ENCODE measurements at regions of chr13 and their contacts with region 1.

Region 1: GRCh38 chr13:32538621-32539246 is at the start of gene N4BP2L2:
- DNase-seq: peak; percentile 95
- H3K4me3 Mint-ChIP-seq: peak within 1 kb of the TSS; percentile 99
- H3K27ac Mint-ChIP-seq: peak within 1 kb of the TSS; percentile 100
- H3K4me1 Mint-ChIP-seq: peaks cover 41% of the 10 kb centered on the region
- H3K27me3 Mint-ChIP-seq: peaks cover 2% of the 10 kb centered on the region
- total RNA-seq, gene N4BP2L2: 86.6 to 102 TPM

Region 2: GRCh38 chr13:32315238-32316027 is 223.3 kb before region 1 on chr13 and contains the starts of genes BRCA2 and ZAR1L:
- CTCF ChIA-PET with region 1: no interaction called
- POLR2A ChIA-PET with region 1: interaction called, 13 read pairs
- intact Hi-C with region 1: loop called (anchors 1 kb)
- DNase-seq: peak; percentile 93
- H3K4me3 Mint-ChIP-seq: peak within 1 kb of the TSS; percentile 95
- H3K27ac Mint-ChIP-seq: peak within 1 kb of the TSS; percentile 99
- H3K4me1 Mint-ChIP-seq: peaks cover 13% of the 10 kb centered on the region
- H3K27me3 Mint-ChIP-seq: no peaks in the 10 kb centered on the region
- total RNA-seq, gene BRCA2: 22.1 to 23.1 TPM
- total RNA-seq, gene ZAR1L: not detected

Region 3: DNA sequence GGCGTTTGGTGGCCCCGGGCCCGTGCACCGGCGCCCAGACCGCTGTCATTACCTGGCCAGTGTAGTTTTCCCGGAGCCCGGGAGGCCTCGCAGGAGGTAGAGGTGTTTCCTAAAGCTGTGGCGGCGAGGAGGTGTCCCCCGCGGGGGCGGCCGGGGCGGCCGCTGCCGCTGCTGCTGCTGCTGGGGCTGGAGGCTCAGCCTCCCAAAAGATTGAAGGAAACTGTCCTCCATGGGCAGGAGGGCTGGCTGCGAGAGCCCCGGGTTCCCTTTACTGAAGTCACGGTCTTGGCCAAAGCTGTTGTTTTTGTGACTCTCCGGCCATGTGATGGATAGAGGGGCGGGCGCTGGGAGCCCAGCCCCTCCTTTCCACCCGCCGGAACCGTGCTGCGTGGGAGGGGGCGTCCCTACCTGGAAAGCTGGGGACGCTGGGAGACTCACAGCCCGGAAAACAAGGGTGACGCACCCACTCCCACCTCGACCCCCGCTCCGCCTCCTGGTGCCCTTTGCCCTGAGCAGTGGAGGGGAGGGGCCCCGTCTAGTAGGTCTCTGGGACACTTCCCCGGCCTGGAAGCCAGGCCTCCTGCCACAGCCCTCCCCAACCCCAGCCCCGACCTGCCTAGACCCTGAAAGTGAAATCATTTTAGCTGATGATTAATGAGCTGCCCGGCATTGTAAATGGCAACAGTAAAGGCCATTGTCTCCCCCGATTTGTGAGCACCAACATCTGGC is 110.7 kb before region 1 on chr13 and contains the start of gene N4BP2L1:
- CTCF ChIA-PET with region 1: no interaction called
- POLR2A ChIA-PET with region 1: interaction called, 6 read pairs
- intact Hi-C with region 1: loop called (anchors 1 kb)
- DNase-seq: peak; percentile 94
- H3K4me3 Mint-ChIP-seq: peak within 1 kb of the TSS; percentile 88
- H3K27ac Mint-ChIP-seq: peak within 1 kb of the TSS; percentile 96
- H3K4me1 Mint-ChIP-seq: peaks cover 38% of the 10 kb centered on the region
- H3K27me3 Mint-ChIP-seq: no peaks in the 10 kb centered on the region
- total RNA-seq, gene N4BP2L1: 22.1 to 24.0 TPM

Region 4: GRCh38 chr13:32447894-32448623 is 90.7 kb before region 1 on chr13:
- CTCF ChIA-PET with region 1: no interaction called
- POLR2A ChIA-PET with region 1: no interaction called
- intact Hi-C with region 1: no loop called
- DNase-seq: no peak
- H3K4me3 Mint-ChIP-seq: no peak overlapping the region
- H3K27ac Mint-ChIP-seq: peak overlapping the region; percentile 40
- H3K4me1 Mint-ChIP-seq: peaks cover 14% of the 10 kb centered on the region
- H3K27me3 Mint-ChIP-seq: no peaks in the 10 kb centered on the region

Region 5: DNA sequence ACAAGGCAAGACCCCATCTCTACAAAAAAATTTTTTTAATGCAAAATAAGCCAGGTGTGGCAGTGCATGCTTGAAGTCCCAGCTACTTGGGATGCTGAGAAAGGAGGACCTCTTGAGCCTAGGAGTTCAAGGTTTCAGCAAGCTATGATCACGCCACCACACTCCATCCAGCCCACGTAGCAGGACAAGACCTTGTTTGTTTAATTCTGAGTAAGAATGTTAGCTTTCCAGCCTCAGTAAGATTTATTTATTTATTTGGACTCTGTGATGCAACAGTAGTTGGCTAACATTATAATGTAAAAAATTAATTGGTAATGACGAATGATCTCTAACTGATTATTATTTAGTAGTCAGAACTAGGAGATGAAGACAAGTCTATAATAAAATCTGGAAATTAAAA is 23.5 kb before region 1 on chr13:
- CTCF ChIA-PET with region 1: no interaction called
- POLR2A ChIA-PET with region 1: interaction called, 5 read pairs
- intact Hi-C with region 1: loop called (anchors 1 kb)
- DNase-seq: no peak
- H3K4me3 Mint-ChIP-seq: no peak overlapping the region
- H3K27ac Mint-ChIP-seq: no peak overlapping the region
- H3K4me1 Mint-ChIP-seq: peaks cover 13% of the 10 kb centered on the region
- H3K27me3 Mint-ChIP-seq: no peaks in the 10 kb centered on the region

Region 6: GRCh38 chr13:32639502-32640105 is 100.9 kb after region 1 on chr13:
- CTCF ChIA-PET with region 1: interaction called, 6 read pairs
- POLR2A ChIA-PET with region 1: no interaction called
- intact Hi-C with region 1: loop called (anchors 1 kb)
- DNase-seq: peak; percentile 56
- H3K4me3 Mint-ChIP-seq: no peak overlapping the region
- H3K27ac Mint-ChIP-seq: no peak overlapping the region
- H3K4me1 Mint-ChIP-seq: peaks cover 41% of the 10 kb centered on the region
- H3K27me3 Mint-ChIP-seq: no peaks in the 10 kb centered on the region

Region 7: GRCh38 chr13:33678906-33679657 is 1140.3 kb after region 1 on chr13:
- CTCF ChIA-PET with region 1: no interaction called
- POLR2A ChIA-PET with region 1: no interaction called
- intact Hi-C with region 1: loop called (anchors 2 kb)
- DNase-seq: peak; percentile 93
- H3K4me3 Mint-ChIP-seq: peak overlapping the region; percentile 81
- H3K27ac Mint-ChIP-seq: peak overlapping the region; percentile 98
- H3K4me1 Mint-ChIP-seq: peaks cover 46% of the 10 kb centered on the region
- H3K27me3 Mint-ChIP-seq: no peaks in the 10 kb centered on the region